ENCODE measurements at regions of chr22 and their contacts with region 1.

Region 1: DNA sequence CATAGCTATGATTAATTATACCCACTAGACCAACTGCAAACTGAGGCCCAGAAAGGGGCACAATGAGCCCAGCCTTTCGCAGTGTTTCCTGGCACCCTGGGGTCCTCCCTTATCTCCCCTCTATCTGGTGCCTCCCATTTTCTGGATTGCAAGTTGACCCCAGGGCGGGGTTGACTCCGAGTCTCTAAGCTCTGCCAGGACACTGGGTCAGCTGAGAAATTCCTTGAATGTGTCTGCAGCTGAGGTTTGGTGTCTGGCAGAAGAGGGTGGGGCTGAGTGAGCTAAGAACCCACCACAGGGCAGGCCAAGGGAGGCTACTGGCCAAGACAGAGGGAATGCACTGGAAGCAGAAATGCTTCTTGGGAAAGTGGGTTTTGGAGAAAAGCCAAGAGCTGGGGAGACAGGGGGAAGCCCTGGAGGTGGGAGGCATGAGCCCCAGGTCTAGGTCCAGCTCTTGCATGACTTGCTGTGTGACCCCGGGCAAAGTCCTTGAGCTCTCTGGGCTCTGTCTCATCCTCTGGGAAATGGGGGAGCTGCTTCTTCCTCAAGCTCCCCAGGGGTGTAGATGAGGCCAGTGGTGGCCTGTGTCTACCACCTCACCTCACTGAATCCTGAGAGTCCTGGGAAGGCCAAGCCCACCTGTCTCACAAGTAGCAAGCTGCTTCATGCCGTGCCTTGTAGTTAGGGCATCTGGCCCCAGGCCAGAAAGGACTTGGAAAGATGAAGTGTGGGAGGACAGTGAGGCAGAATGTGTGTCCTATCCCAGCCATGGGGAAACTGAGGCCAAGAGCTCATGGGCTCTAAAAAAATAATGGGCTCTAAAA is 2.3 kb downstream of the MMP11 start:
- DNase-seq: no peak

Region 2: DNA sequence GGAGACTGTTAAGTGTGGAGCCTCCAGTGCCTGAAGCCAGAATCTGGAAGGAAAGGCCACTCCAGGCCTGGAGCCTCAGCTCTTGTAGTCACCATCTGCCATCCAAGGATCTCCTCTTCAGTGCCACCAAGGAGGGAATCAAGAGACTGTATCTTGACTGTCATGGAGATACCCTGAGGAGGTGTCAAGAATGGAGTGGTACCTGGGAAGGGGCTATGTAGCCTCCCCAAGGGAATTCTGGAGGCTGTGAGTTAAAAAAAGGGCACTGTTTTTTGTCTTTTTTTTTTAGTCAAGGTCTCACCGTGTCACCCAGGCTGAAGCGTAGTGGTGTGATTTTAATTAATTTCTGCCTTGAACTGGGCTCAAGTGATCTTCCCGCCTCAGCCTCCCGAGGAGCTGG is 15.4 kb before region 1 on chr22:
- CTCF ChIA-PET with region 1: no interaction called
- POLR2A ChIA-PET with region 1: no interaction called
- DNase-seq: no peak

Region 3: GRCh38 chr22:23786752-23787599 is 12.0 kb after region 1 on chr22 and contains the start of gene SMARCB1:
- CTCF ChIA-PET with region 1: interaction called, 4 read pairs
- POLR2A ChIA-PET with region 1: interaction called, 23 read pairs
- DNase-seq: peak; percentile 98

Region 4: DNA sequence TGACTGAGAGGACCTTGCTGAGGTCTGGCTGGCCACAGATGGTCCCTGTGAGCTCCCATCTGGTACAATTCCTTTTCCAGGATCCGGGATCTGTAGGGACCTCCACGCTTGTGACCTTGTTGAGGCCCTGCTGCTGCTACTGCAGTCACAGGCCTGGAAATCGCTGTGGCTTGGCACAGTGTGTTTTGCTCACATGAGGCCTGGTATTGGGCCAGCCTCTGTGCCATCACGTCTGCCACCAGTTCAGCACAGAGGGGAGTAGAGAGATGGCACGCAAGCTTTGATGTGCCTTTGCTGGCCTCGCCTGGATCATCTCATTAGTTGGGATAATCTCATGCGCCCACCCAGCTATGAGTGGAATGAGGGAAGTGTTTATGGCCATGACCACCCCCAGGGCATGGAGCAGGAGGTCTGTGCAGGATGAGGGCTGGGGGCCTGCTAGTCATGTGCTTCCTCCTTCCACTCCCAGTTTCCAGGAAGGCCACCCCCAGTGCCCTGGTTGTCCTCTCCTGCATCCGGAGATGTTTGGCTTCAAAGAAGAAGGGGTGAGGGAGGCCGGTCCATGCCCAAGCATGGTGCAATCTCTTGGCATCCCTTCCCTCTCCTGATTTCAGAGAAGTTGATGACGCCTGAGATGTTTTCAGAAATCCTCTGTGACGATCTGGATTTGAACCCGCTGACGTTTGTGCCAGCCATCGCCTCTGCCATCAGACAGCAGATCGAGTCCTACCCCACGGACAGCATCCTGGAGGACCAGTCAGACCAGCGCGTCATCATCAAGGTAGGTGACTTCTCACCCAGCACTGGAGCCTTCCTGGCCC is 41.4 kb after region 1 on chr22:
- CTCF ChIA-PET with region 1: no interaction called
- POLR2A ChIA-PET with region 1: no interaction called
- DNase-seq: no peak